ENCODE measurements at regions of chr16 and their contacts with region 1.

Region 1: GRCh38 chr16:84967828-84968227 is 43.5 kb downstream of the ZDHHC7 start:
- DNase-seq: no peak
- H3K4me3 ChIP-seq: no peak overlapping the region
- H3K4me1 ChIP-seq: no peaks in the 10 kb centered on the region
- H3K27me3 ChIP-seq: 0 out of 2 replicates have a peak, but pooled peaks cover 6% of the 10 kb centered on the region

Region 2: GRCh38 chr16:84511180-84511824 is 456.5 kb before region 1 on chr16:
- in situ Hi-C with region 1: loop called (anchors 5 kb)
- DNase-seq: peak; percentile 80 to 86
- H3K4me3 ChIP-seq: no peak overlapping the region
- H3K4me1 ChIP-seq: peaks cover 7% of the 10 kb centered on the region
- H3K27me3 ChIP-seq: no peaks in the 10 kb centered on the region

Region 3: DNA sequence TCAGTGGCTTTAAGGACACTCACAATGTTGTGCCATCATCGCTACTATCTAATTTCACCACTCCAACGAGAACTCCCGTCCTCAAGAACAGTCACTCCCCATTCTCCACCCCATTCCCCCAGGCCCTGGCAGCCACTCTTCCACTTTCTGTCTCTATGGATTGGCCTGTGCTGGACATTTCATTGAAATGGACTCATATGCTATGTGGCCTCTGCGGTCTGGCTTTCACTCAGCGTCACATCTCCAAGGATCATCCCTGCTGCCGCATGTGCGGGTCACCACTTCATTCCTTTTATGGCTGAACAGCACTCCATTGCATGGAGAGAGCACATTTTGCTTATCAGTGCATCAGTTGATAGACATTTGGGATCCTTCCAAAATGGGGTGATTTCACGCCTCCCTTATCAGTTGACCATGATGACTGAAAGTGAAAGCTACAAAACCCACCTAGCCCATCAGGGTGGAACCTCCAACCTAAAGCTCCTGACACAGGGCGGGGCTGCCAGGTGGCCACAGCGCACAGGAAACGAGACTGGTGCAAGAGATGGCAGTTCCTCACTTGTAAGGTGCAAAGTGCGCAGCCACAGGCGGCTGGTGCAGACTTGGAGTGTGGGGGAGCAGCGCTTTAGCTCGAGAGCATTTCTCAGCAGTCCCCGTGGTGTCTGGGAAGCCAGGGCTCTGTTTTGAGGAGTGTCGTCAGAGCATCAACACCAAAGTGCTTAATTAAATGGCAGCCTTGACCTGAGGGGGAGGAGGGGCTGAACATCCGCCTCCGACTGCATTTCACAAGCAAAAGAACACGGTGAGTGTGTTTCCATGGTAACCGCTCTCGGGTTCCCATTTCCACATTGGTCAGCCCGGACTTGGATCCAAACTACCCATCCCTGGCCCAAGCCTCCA is 373.8 kb before region 1 on chr16:
- in situ Hi-C with region 1: no loop called
- DNase-seq: no peak
- H3K4me3 ChIP-seq: no peak overlapping the region
- H3K4me1 ChIP-seq: no peaks in the 10 kb centered on the region
- H3K27me3 ChIP-seq: no peaks in the 10 kb centered on the region

Region 4: DNA sequence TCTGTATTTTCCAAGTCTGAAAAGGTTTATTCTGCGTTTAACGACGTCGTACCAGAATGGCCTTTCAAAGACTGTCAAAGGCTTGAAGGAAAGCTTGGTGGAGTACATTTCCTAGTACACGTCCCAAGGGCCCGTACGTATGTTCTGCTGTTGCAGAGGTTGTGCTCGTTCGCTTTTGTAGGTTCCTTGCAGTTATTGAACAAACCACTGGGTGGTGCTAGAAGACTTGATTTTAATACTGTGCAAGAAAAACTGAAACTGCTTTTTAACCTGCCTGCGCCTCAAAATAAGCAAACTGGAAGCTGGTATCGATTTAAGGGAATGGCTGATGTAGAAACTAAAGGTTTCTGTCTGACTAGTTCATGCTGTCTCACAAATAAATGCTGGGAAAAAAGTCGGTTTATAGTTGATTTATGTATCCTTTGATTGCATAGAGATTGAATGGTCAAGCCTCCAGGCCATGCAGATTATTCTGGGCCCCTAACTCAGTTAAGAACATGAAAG is 213.4 kb before region 1 on chr16:
- in situ Hi-C with region 1: loop called (anchors 5 kb)
- DNase-seq: peak; percentile 76 to 85
- H3K4me3 ChIP-seq: no peak overlapping the region
- H3K4me1 ChIP-seq: peaks cover 14% of the 10 kb centered on the region
- H3K27me3 ChIP-seq: no peaks in the 10 kb centered on the region

Measured in HAP-1 (cell line).